ENCODE measurements at regions of chr10 and their contacts with region 1.

Region 1: GRCh38 chr10:120942806-120943413 is 91.7 kb downstream of the WDR11 start:
- DNase-seq: peak; percentile 81
- ATAC-seq: peak; percentile 96
- H3K4me3 ChIP-seq: peak overlapping the region; percentile 27 to 48
- H3K27ac ChIP-seq: no peak overlapping the region
- H3K4me1 ChIP-seq: peaks cover 0 to 13% of the 10 kb centered on the region in 2 experiments; a peak in 3 of 4 replicates
- H3K27me3 ChIP-seq: no peaks in the 10 kb centered on the region
- CTCF ChIP-seq: peak; percentile 85 to 96 (median 95)
- POLR2A ChIP-seq: no peak
- RAD21 ChIP-seq: peak; percentile 99

Region 2: GRCh38 chr10:121168545-121169216 is 225.8 kb after region 1 on chr10:
- CTCF ChIA-PET with region 1: no interaction called
- POLR2A ChIA-PET with region 1: no interaction called
- RAD21 ChIA-PET with region 1: no interaction called
- intact Hi-C with region 1: loop called (anchors 10 kb)
- DNase-seq: peak; percentile 19
- ATAC-seq: peak; percentile 86
- H3K4me3 ChIP-seq: no peak overlapping the region
- H3K27ac ChIP-seq: no peak overlapping the region
- H3K4me1 ChIP-seq: peaks cover 2 to 6% of the 10 kb centered on the region in 2 experiments; a peak in 1 of 4 replicates
- H3K27me3 ChIP-seq: 0 out of 2 replicates have a peak, but pooled peaks cover 4% of the 10 kb centered on the region
- CTCF ChIP-seq: peak; percentile 13 to 48 (median 41); a peak in 4 of 6 replicates
- POLR2A ChIP-seq: no peak
- RAD21 ChIP-seq: peak; percentile 75

Region 3: GRCh38 chr10:121608469-121609190 is 665.7 kb after region 1 on chr10:
- CTCF ChIA-PET with region 1: no interaction called
- POLR2A ChIA-PET with region 1: no interaction called
- RAD21 ChIA-PET with region 1: no interaction called
- intact Hi-C with region 1: loop called (anchors 2 kb)
- DNase-seq: peak; percentile 43
- ATAC-seq: peak; percentile 95
- H3K4me3 ChIP-seq: peak overlapping the region; percentile 17 to 18
- H3K27ac ChIP-seq: no peak overlapping the region; the same call in 1 of the 2 replicates
- H3K4me1 ChIP-seq: peaks cover 7 to 17% of the 10 kb centered on the region in 2 experiments; a peak in 3 of 4 replicates
- H3K27me3 ChIP-seq: no peaks in the 10 kb centered on the region
- CTCF ChIP-seq: peak; percentile 90 to 98 (median 93)
- POLR2A ChIP-seq: no peak
- RAD21 ChIP-seq: peak; percentile 91

Region 4: DNA sequence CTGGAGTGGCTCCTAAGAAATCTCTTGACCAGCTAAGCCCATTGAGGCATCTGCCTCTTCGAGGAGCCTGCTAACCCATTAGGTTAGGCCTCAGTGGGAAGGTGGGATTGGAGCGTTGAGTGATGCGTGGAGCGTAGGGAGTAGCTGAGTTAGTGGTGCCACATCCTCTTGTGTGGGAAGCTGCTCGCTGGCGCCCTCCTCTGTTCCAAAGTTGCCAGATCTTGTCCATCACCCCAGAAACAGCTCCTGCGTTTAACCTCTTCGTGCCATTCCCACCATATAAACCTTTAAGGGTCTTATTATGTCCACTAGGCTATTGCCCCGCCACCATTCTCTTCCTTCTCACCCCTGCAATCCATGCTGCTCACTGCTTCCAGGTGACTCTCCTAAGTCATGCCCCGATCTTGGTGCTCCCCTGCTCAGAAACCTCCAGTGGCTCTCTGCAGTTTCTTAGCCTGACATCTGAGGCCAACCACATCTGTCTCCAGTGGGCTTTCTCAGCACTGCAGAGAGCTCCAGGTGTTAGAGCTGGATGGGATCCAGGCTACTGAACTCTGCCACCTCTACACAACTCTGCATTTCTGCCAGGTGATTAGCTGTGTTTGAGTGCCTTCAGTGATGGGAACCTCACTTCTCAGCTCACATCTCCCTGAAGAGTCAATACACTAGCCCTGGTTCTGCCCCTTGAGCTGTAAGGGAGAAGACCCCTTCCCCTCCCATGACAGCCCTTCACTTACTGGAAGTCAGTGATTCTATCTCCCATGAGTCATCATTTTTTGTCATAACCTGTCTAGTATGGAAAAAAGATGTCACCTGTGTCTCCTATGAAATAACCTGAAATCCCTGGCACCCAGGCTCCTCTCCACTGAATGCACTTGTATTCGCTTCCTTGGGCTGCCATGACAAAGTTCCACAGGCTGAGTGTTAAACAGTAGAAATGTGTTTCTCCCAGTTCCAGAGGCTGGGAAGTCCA is 720.3 kb after region 1 on chr10:
- CTCF ChIA-PET with region 1: interaction called, 4 read pairs
- POLR2A ChIA-PET with region 1: no interaction called
- RAD21 ChIA-PET with region 1: no interaction called
- intact Hi-C with region 1: loop called (anchors 10 kb)
- DNase-seq: peak; percentile 22
- ATAC-seq: peak; percentile 87
- H3K4me3 ChIP-seq: no peak overlapping the region
- H3K27ac ChIP-seq: no peak overlapping the region
- H3K4me1 ChIP-seq: peaks cover 0 to 5% of the 10 kb centered on the region in 2 experiments; a peak in 1 of 4 replicates
- H3K27me3 ChIP-seq: no peaks in the 10 kb centered on the region
- CTCF ChIP-seq: peak; percentile 47 to 78 (median 71); a peak in 5 of 6 replicates
- POLR2A ChIP-seq: no peak
- RAD21 ChIP-seq: peak; percentile 71

Region 5: DNA sequence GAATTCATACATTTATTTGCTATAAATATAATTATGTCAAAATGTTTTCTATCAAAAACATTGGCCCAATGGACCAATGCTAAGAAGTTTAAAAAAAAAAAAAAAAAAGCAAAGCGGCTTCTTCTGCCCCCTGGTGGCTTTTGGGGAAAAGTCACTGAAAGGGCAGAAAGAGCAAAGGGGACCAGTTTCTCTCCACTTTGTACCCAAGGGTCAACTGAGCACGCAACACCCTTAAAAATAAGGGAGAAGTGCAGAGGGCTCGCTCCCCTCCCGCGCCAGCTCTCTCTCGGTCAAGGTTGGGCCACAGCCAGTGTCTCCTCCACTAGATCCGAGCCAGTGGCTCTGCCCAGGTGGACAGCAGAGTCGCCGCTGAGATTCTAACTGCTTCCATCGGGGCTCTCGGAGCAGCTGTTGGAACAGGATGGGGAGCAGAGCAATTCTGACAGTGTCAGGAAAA is 791.7 kb after region 1 on chr10:
- CTCF ChIA-PET with region 1: no interaction called
- POLR2A ChIA-PET with region 1: no interaction called
- RAD21 ChIA-PET with region 1: no interaction called
- intact Hi-C with region 1: loop called (anchors 1 kb)
- DNase-seq: peak; percentile 19
- ATAC-seq: peak; percentile 64
- H3K4me3 ChIP-seq: no peak overlapping the region
- H3K27ac ChIP-seq: no peak overlapping the region
- H3K4me1 ChIP-seq: no peaks in the 10 kb centered on the region
- H3K27me3 ChIP-seq: no peaks in the 10 kb centered on the region
- CTCF ChIP-seq: peak; percentile 85 to 90 (median 89)
- POLR2A ChIP-seq: no peak
- RAD21 ChIP-seq: peak; percentile 78

Region 6: GRCh38 chr10:121886997-121887622 is 944.2 kb after region 1 on chr10:
- CTCF ChIA-PET with region 1: interaction called, 4 read pairs
- POLR2A ChIA-PET with region 1: no interaction called
- RAD21 ChIA-PET with region 1: no interaction called
- intact Hi-C with region 1: loop called (anchors 1 kb)
- DNase-seq: peak; percentile 60
- ATAC-seq: peak; percentile 96
- H3K4me3 ChIP-seq: no peak overlapping the region
- H3K27ac ChIP-seq: no peak overlapping the region
- H3K4me1 ChIP-seq: no peaks in the 10 kb centered on the region
- H3K27me3 ChIP-seq: no peaks in the 10 kb centered on the region
- CTCF ChIP-seq: peak; percentile 80 to 98 (median 92)
- POLR2A ChIP-seq: no peak
- RAD21 ChIP-seq: peak; percentile 88

Region 7: GRCh38 chr10:121900443-121901174 is 957.7 kb after region 1 on chr10:
- CTCF ChIA-PET with region 1: interaction called, 5 read pairs
- POLR2A ChIA-PET with region 1: no interaction called
- RAD21 ChIA-PET with region 1: no interaction called
- intact Hi-C with region 1: loop called (anchors 2 kb)
- DNase-seq: peak; percentile 52
- ATAC-seq: peak; percentile 96
- H3K4me3 ChIP-seq: no peak overlapping the region
- H3K27ac ChIP-seq: no peak overlapping the region
- H3K4me1 ChIP-seq: no peaks in the 10 kb centered on the region
- H3K27me3 ChIP-seq: no peaks in the 10 kb centered on the region
- CTCF ChIP-seq: peak; percentile 70 to 97 (median 71); a peak in 5 of 6 replicates
- POLR2A ChIP-seq: no peak
- RAD21 ChIP-seq: peak; percentile 83